ENCODE measurements at regions of chr17 and their contacts with region 1.

Region 1: GRCh38 chr17:20121359-20122253 is 112.4 kb downstream of the SPECC1 start:
- DNase-seq: peak; percentile 70
- H3K4me3 ChIP-seq: peak overlapping the region; percentile 0
- H3K27ac ChIP-seq: no peak overlapping the region
- H3K4me1 ChIP-seq: no peaks in the 10 kb centered on the region
- H3K27me3 ChIP-seq: no peaks in the 10 kb centered on the region
- CTCF ChIP-seq: peak; percentile 88

Region 2: DNA sequence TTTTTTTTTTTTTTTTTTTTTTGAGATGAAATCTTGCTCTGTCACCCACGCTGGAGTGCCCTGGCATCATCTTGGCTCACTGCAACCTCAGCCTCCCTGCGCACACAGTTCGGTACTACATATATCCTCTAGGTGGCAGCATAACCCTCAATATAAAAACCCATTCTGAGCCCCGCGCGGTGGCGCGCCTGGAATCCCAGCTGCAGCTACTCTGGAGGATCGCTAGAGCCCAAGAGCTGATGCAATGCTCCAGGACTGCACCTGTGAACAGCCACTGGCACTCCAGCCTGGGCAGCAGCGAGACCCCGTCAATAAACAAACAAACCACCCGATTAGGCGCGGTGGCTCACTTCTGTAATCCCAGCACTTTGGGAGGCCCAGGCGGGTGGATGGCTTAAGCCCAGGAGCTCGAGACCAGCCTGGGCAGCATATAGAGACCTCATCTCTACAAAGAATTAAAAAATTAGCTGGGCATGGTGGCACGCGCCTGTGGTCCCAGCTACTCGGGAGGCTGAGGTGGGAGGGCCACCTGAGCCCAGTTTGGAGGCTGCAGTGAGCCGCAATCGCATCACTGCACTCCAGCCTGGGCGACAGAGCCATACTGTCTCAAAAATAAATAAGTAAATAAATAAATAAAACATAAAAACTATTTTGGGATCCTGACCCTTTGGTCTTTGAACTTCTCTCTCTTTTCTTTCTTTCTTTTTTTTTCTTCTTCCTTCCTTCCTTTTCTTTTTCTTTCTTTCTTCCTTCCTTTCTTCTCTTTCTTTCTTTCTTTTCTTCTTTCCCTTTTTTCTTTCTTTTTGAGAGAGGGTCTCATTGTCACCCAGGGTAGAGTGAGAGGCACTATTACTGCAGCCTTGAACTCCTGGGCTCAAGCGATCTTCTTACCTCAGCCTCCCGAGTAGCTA is 128.5 kb before region 1 on chr17:
- intact Hi-C with region 1: loop called (anchors 2 kb)
- DNase-seq: peak; percentile 83
- H3K4me3 ChIP-seq: no peak overlapping the region
- H3K27ac ChIP-seq: no peak overlapping the region
- H3K4me1 ChIP-seq: no peaks in the 10 kb centered on the region
- H3K27me3 ChIP-seq: no peaks in the 10 kb centered on the region
- CTCF ChIP-seq: peak; percentile 69

Region 3: DNA sequence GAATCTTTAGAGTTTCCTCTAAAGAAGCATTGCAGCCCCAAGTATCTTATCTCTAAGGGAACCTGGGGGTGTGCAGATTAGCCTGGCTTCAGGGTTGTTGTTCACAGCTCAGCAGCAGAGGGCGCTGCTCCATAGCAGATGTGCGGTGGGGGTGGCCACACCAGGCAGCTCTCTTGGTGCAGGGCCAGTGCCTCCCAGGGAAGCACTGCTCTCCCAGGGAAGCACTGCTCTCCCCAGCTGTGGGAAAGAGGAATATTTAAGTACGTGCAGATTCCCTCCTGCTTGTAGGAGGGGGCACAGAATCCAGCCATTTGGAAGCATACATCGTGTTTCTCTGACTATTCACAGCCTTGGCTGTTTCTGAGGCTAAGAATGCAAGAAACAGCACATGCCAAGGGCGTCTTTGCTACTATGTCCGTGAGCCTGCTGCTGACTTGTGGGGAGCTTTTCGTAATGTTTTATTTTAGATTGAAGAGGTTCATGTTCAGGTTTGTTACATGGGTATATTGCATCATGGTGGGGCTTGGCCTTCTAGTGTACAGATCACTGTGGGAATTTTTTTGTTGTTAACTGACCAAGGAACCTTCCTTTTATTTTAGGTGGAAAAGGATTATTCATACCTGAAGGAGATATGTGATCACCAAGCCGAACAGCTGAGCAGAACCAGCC is 105.3 kb after region 1 on chr17:
- intact Hi-C with region 1: loop called (anchors 5 kb)
- DNase-seq: peak; percentile 78
- H3K4me3 ChIP-seq: no peak overlapping the region
- H3K27ac ChIP-seq: no peak overlapping the region
- H3K4me1 ChIP-seq: no peaks in the 10 kb centered on the region
- H3K27me3 ChIP-seq: no peaks in the 10 kb centered on the region
- CTCF ChIP-seq: peak; percentile 71

Region 4: DNA sequence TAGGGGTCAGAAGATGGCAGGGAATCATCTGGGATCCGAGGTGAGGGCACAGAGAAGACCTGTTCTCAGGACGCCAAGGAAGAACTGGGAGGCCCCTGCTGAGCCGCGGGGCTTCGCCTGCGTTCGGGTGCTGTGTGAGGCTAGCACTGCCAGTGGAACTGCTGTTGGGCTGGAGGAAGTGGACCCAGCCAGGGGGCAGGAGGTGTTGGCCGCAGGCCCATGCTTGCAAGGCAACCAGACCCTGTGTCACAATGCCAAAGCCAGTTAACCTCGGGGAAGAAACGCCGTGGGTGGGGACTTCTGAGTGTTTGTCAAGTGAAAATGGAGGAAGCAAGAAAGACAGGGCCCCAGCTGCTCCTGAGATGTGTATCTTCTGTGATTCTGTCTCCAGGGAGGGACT is 160.3 kb after region 1 on chr17:
- intact Hi-C with region 1: no loop called
- DNase-seq: peak; percentile 19
- H3K4me3 ChIP-seq: no peak overlapping the region
- H3K27ac ChIP-seq: no peak overlapping the region
- H3K4me1 ChIP-seq: no peaks in the 10 kb centered on the region
- H3K27me3 ChIP-seq: no peaks in the 10 kb centered on the region
- CTCF ChIP-seq: no peak

Region 5: DNA sequence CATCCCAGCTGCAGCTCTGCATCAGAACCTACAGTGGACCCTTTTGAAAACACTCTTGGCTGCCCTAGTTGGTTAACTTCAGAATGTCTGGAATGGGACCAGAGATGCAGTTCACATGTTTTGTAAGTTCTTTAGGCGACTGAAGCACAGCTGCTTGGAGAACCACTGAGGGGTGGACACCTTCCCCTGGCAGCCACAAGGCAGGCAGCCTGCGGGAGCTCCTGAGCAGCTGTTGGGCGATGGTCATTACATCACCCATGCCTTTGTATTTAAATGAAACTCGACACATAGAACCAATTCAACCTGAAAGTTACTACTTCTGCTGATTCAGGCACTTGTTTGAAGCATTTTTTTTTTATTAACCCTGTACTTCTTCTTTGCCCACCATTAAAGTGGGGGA is 194.2 kb after region 1 on chr17:
- intact Hi-C with region 1: loop called (anchors 5 kb)
- DNase-seq: no peak
- H3K4me3 ChIP-seq: no peak overlapping the region
- H3K27ac ChIP-seq: no peak overlapping the region
- H3K4me1 ChIP-seq: no peaks in the 10 kb centered on the region
- H3K27me3 ChIP-seq: no peaks in the 10 kb centered on the region
- CTCF ChIP-seq: no peak

Measured in colonic mucosa (tissue), 4 donors.